A673 (cell line): ENCODE measurements at regions of chr17 and their contacts with region 1.

Region 1: GRCh38 chr17:8144720-8145231 is 7.4 kb downstream of the PER1 start:
- DNase-seq: no peak
- H3K4me3 ChIP-seq: no peak overlapping the region
- H3K27ac ChIP-seq: no peak overlapping the region
- H3K4me1 ChIP-seq: no peaks in the 10 kb centered on the region
- H3K27me3 ChIP-seq: no peaks in the 10 kb centered on the region
- CTCF ChIP-seq: no peak

Region 2: GRCh38 chr17:8204761-8205555 is 60.2 kb after region 1 on chr17:
- CTCF ChIA-PET with region 1: no interaction called
- POLR2A ChIA-PET with region 1: no interaction called
- intact Hi-C with region 1: no loop called
- DNase-seq: no peak
- H3K4me3 ChIP-seq: no peak overlapping the region
- H3K27ac ChIP-seq: no peak overlapping the region
- H3K4me1 ChIP-seq: peaks cover 11% of the 10 kb centered on the region
- H3K27me3 ChIP-seq: no peaks in the 10 kb centered on the region
- CTCF ChIP-seq: no peak

Region 3: DNA sequence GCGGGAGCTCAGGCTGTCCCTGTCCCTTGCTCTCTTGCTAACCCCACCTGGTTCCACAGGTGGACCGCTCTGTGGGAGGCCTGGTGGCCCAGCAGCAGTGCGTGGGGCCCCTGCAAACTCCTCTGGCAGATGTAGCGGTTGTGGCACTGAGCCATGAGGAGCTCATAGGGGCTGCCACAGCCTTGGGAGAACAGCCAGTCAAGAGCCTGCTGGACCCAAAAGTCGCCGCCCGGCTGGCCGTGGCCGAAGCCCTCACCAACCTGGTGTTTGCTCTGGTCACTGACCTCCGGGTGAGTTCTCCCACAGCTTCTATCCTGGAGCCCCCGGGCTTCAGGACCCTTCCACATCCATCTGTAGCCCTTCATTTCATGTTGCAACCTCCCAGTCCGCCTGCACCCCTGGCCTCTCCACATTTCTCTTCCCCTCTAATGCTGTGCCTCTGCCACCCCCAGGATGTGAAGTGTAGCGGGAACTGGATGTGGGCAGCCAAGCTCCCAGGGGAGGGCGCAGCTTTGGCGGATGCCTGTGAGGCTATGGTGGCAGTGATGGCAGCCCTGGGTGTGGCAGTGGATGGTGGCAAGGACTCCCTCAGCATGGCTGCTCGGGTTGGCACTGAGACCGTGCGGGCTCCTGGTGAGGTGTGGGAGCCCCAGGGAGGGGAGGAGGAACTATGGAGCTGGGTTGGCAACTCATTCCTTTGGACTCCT is 120.2 kb after region 1 on chr17:
- CTCF ChIA-PET with region 1: no interaction called
- POLR2A ChIA-PET with region 1: no interaction called
- intact Hi-C with region 1: no loop called
- DNase-seq: no peak
- H3K4me3 ChIP-seq: no peak overlapping the region
- H3K27ac ChIP-seq: no peak overlapping the region
- H3K4me1 ChIP-seq: no peaks in the 10 kb centered on the region
- H3K27me3 ChIP-seq: no peaks in the 10 kb centered on the region
- CTCF ChIP-seq: no peak

Region 4: DNA sequence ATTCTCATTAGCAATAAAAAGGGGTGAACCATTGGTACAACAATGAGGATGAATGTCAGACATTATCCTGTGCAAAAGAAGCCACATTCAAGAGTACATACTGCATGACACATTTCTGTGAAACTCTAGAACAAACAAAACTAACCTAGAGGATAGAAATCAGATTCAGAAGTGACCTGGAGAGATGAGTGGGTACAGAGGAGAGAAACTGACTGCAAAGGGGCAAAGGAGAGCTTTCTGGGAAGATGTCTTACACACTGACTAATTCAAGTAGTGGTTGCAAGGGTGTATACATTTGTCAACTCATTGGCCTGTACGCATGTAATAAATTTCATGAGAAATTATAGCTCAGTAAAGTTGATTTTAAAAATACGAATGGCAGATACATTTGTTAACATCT is 1938.0 kb after region 1 on chr17:
- CTCF ChIA-PET with region 1: no interaction called
- POLR2A ChIA-PET with region 1: interaction called, 13 read pairs
- intact Hi-C with region 1: no loop called
- DNase-seq: no peak
- H3K4me3 ChIP-seq: no peak overlapping the region
- H3K27ac ChIP-seq: no peak overlapping the region
- H3K4me1 ChIP-seq: no peaks in the 10 kb centered on the region
- H3K27me3 ChIP-seq: no peaks in the 10 kb centered on the region
- CTCF ChIP-seq: no peak